Activated T-helper 1 cell treated with anti-CD3 and anti-CD28 coated beads, Interleukin-12 subunit alpha, Interleukin-12 subunit beta, Interleukin-2, Interleukin-4 antibody, amounts not matched to agents 30 ng/mL and 10 ng/mL and 1 ng/mL, durations not matched to agents 14 hours and 24 hours and 36 hours (primary cell): ENCODE measurements at regions of chr11 and their contacts with region 1.

Region 1: GRCh38 chr11:81658722-81659121 is 1074.9 kb downstream of the FAM181B start:
- DNase-seq: no peak
- H3K4me3 Mint-ChIP-seq: no peak overlapping the region
- H3K27ac Mint-ChIP-seq: no peak overlapping the region
- H3K4me1 Mint-ChIP-seq: no peaks in the 10 kb centered on the region
- H3K27me3 Mint-ChIP-seq: peaks cover 1% of the 10 kb centered on the region

Region 2: GRCh38 chr11:82038153-82038552 is 379.4 kb after region 1 on chr11:
- intact Hi-C with region 1: loop called (anchors 5 kb)
- DNase-seq: no peak
- H3K4me3 Mint-ChIP-seq: no peak overlapping the region
- H3K27ac Mint-ChIP-seq: no peak overlapping the region
- H3K4me1 Mint-ChIP-seq: no peaks in the 10 kb centered on the region
- H3K27me3 Mint-ChIP-seq: no peaks in the 10 kb centered on the region